ENCODE measurements at regions of chr16 and their contacts with region 1.

Region 1: GRCh38 chr16:69310653-69311532 is at the start of gene VPS4A:
- DNase-seq: peak; percentile 97
- H3K4me3 Mint-ChIP-seq: peak within 1 kb of the TSS; percentile 100
- H3K27ac Mint-ChIP-seq: peak within 1 kb of the TSS; percentile 98
- H3K4me1 Mint-ChIP-seq: peaks cover 17% of the 10 kb centered on the region
- H3K27me3 Mint-ChIP-seq: no peaks in the 10 kb centered on the region
- total RNA-seq, gene VPS4A: 34.6 and 36.3 TPM in 2 replicates

Region 2: GRCh38 chr16:69330286-69331109 is 19.6 kb after region 1 on chr16 and contains the start of gene PDF:
- intact Hi-C with region 1: loop called (anchors 1 kb)
- DNase-seq: peak; percentile 83
- H3K4me3 Mint-ChIP-seq: peak within 1 kb of the TSS; percentile 84
- H3K27ac Mint-ChIP-seq: peak within 1 kb of the TSS; percentile 75
- H3K4me1 Mint-ChIP-seq: peaks cover 31% of the 10 kb centered on the region
- H3K27me3 Mint-ChIP-seq: no peaks in the 10 kb centered on the region
- total RNA-seq, gene PDF: 15.5 and 17.8 TPM in 2 replicates

Region 3: GRCh38 chr16:69339289-69340108 is 28.6 kb after region 1 on chr16 and contains the starts of genes COG8 and NIP7:
- intact Hi-C with region 1: loop called (anchors 1 kb)
- DNase-seq: peak; percentile 91
- H3K4me3 Mint-ChIP-seq: peak within 1 kb of the TSS; percentile 98
- H3K27ac Mint-ChIP-seq: peak within 1 kb of the TSS; percentile 96
- H3K4me1 Mint-ChIP-seq: peaks cover 31% of the 10 kb centered on the region
- H3K27me3 Mint-ChIP-seq: no peaks in the 10 kb centered on the region
- total RNA-seq, gene COG8: 41.5 and 42.9 TPM in 2 replicates
- total RNA-seq, gene NIP7: 60.5 and 60.8 TPM in 2 replicates

Region 4: DNA sequence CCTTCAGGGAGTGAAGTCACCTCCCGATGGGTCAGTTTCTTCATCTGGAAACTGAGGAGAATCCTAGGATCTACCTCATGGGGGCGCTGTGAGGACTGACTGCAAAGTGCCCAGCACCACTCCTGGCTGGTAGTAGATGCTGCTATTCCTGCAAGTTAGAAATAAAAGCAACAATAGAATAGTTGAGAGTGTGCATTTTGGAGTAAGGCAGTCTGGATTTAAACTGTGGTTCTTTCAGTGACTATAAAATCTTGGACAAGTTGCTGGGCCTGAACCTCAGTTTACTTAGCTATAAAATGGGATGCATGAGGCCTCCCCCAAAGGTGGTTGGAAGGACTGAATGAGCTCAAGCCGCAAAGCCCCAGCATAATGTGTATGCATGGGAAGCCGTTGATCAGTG is 184.1 kb after region 1 on chr16:
- intact Hi-C with region 1: no loop called
- DNase-seq: peak; percentile 13
- H3K4me3 Mint-ChIP-seq: no peak overlapping the region
- H3K27ac Mint-ChIP-seq: peak overlapping the region; percentile 46
- H3K4me1 Mint-ChIP-seq: peaks cover 3% of the 10 kb centered on the region
- H3K27me3 Mint-ChIP-seq: no peaks in the 10 kb centered on the region